ENCODE measurements at regions of chr21 and their contacts with region 1.

Region 1: DNA sequence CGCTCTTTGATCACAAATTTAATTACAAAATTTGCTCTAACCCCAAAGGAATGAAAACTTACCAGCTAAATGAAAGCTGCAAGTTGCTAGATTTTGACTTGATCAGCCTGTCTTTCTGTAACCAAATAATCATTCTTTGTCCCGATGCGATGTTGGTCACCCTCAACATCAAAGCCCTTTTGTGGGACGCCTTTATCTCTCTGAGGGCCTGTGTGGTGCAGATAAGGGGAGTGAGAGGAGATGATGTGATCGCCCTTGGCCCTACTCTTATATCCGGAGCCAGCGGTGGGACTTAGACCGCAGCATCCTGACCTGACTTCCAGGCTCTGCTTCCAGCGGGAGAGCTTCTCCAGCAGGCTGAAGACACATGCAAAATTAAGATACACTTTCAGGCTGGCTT is 19.3 kb upstream of the UMODL1 start:
- DNase-seq: no peak
- H3K4me3 ChIP-seq: no peak overlapping the region
- H3K27ac ChIP-seq: no peak overlapping the region
- H3K4me1 ChIP-seq: no peaks in the 10 kb centered on the region
- H3K27me3 ChIP-seq: no peaks in the 10 kb centered on the region
- CTCF ChIP-seq: no peak
- POLR2A ChIP-seq: no peak

Region 2: GRCh38 chr21:41032541-41032940 is 1019.2 kb before region 1 on chr21:
- intact Hi-C with region 1: no loop called
- DNase-seq: no peak
- H3K4me3 ChIP-seq: no peak overlapping the region
- H3K27ac ChIP-seq: no peak overlapping the region
- H3K4me1 ChIP-seq: no peaks in the 10 kb centered on the region
- H3K27me3 ChIP-seq: no peaks in the 10 kb centered on the region
- CTCF ChIP-seq: no peak
- POLR2A ChIP-seq: no peak

Region 3: GRCh38 chr21:41973861-41974751 is 77.7 kb before region 1 on chr21:
- intact Hi-C with region 1: no loop called
- DNase-seq: peak in 1 of 2 donors; percentile 13
- H3K4me3 ChIP-seq: no peak overlapping the region
- H3K27ac ChIP-seq: no peak overlapping the region
- H3K4me1 ChIP-seq: no peaks in the 10 kb centered on the region
- H3K27me3 ChIP-seq: no peaks in the 10 kb centered on the region
- CTCF ChIP-seq: no peak
- POLR2A ChIP-seq: no peak

Region 4: DNA sequence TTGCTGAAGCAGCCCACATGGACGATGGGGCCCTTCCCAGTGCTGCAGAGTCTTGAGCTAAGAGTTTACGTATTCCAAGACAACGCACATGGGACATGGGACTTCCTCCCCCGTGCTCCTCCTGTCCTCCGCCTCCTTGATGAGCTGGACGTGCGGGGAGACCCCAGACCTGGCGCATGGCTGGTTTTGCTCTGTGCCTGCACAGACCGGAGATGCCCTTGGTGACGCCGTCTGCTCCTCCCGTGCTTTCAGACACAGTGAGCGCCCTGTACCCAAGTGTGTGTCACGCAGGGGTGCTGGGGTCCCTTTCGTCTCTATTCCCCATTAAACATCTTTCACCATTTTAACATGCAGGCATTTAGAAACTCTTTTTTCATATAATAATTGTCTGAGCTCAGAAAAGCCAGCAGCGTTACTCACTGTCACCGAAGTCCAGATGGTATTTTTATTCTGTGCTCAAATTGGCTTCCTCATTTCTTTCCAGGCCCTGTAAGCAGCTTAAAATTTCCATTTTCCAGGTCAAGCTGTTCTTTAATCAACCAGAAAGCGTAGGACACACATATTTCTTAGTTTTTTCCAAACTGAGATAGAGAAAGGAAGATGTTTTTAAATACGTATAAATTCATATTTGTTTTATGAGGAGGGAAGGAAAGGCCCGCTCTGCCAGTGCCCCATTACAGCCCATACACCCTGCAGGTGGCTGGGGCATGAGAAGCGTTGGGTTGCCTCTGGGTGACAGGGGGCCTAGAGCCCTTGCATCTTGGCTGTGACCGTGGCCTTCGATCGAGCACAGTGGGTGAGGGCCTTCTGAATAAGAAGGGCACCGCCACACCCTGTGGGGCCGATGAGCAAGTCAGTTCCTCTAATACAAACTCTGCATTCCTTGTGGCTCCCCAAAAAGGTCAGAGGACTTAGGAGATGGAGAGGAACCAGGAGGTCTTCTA is 23.7 kb before region 1 on chr21:
- intact Hi-C with region 1: no loop called
- DNase-seq: no peak
- H3K4me3 ChIP-seq: no peak overlapping the region
- H3K27ac ChIP-seq: no peak overlapping the region
- H3K4me1 ChIP-seq: peaks cover 0 to 3% of the 10 kb centered on the region in 2 donors
- H3K27me3 ChIP-seq: no peaks in the 10 kb centered on the region
- CTCF ChIP-seq: no peak
- POLR2A ChIP-seq: no peak

Region 5: DNA sequence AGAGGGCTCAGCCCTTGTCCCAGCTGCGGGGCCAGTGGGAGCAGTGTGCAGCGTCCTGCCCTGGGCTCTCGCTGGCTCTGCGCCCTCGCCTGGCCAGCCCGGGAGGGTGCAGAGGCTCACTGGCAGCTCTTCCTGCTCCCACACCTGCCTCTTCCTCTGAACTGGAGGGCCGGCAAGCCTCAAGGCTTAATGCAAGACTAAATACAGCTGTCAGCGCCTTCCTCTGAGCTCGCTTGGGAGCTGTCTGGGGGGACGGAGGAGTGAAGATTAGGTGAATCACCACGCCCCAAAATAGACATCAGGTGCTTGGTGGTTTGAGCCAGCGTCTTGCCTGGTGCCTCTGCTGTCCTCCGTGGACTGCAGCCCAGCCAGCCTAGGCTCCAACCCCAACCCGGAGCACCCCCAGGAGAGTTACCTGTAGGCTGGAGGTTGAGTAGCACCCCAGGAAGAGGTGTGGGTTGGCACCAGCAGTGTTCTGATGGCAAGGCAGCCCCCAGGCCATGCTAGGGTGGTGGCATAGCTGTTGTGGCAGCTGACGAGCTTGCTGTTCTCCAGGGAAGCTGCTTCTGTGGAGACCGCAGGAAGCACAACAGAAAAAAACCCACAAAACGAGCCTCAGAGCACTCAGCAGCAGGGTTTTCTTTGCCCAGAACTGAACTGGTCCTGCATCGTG is 56.2 kb after region 1 on chr21:
- intact Hi-C with region 1: no loop called
- DNase-seq: peak in 1 of 2 donors; percentile 57
- H3K4me3 ChIP-seq: peak overlapping the region in 1 of 3 donors; percentile 37
- H3K27ac ChIP-seq: peak overlapping the region in 1 of 2 donors; percentile 59
- H3K4me1 ChIP-seq: no peaks in the 10 kb centered on the region
- H3K27me3 ChIP-seq: no peaks in the 10 kb centered on the region
- CTCF ChIP-seq: peak in 1 of 3 donors; percentile 85
- POLR2A ChIP-seq: no peak

Region 6: GRCh38 chr21:42799516-42799915 is 747.7 kb after region 1 on chr21:
- intact Hi-C with region 1: loop called (anchors 5 kb)
- DNase-seq: no peak
- H3K4me3 ChIP-seq: no peak overlapping the region
- H3K27ac ChIP-seq: no peak overlapping the region
- H3K4me1 ChIP-seq: no peaks in the 10 kb centered on the region
- H3K27me3 ChIP-seq: no peaks in the 10 kb centered on the region
- CTCF ChIP-seq: no peak
- POLR2A ChIP-seq: no peak